ENCODE measurements at regions of chr3 and their contacts with region 1.

Region 1: DNA sequence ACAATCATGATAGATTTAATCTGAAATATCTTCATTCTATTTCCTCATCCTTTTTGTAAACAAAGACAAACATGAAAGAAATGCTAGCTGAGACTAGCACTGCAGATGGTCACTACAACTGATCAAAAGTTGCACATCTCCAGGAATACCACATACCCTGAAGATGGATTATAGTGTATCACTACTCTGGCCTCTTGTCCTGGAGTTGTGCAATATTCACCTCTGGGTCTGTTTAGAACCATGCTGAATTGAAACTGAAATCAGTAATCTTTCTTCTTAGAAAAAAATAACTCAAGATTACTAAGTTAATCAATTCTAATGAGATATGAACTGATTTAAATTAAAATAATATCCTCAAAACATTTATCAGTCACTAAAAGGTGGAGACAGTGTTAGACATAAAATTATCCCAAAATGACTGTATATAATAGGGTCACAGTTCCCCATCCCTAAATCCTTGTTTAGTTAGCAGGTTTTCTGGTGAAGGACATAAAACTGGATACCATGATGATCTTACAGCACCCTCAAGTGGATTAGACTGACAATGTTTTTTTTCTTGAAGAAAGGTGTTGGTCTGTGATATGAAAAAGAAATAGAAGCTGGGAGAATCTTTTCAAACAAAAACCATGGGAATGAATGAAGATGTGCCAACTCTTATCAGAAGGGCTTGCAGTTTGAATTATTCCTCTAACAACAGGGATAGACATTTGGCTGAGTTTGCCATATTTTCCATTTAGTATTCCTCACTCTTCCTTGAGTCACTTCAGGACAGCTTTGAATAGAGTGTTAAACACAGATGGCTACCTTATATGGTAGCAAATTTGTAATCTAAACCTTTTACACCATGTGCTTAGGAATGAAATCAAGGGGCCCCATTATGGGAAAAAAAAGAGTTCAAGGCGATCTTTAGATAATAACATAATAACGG is 7.1 kb upstream of the TTC14 start:
- DNase-seq: peak; percentile 53
- ATAC-seq: peak; percentile 87
- H3K4me3 ChIP-seq: no peak overlapping the region
- H3K27ac ChIP-seq: no peak overlapping the region
- H3K4me1 ChIP-seq: no peaks in the 10 kb centered on the region
- H3K27me3 ChIP-seq: no peaks in the 10 kb centered on the region
- CTCF ChIP-seq: peak; percentile 76; the same call in 1 of the 2 replicates

Region 2: DNA sequence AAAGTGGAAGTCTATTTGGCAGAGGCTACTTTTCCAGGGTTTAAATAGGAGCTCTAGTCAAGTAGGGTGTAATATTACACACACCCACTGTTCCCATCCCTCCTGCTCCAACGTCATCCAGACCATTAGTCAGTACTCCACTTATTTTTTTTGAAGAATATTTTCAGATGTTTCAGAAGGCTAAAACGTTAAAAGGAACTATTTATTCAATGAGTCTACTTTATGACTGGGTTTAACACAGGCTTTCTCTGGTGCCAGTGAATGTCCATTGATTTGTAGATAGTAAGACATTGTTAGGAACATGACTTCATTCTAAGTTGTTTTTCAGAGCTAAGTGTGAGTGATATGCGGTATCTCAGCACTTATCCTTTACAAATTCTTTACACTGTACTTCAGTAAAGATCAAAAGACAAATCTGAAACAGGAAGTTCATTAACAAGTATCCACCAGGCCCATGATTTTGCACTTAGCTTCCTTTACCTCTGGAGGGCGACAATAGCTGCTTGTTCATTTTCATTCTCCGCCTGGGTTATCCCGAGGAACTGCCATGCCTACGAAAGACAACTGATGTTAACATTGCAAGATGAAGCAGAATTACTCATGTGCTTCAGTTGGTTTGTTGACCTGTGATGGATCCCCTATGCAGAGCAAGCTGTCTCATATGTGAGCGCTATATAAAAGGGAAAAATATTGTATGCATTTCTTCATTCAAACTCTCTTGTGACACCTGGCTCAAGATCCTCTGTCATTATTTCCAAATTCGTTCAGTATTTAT is 783.4 kb before region 1 on chr3:
- CTCF ChIA-PET with region 1: no interaction called
- POLR2A ChIA-PET with region 1: no interaction called
- in situ Hi-C with region 1: no loop called
- intact Hi-C with region 1: loop called (anchors 2 kb)
- DNase-seq: peak; percentile 60
- ATAC-seq: peak; percentile 91
- H3K4me3 ChIP-seq: no peak overlapping the region
- H3K27ac ChIP-seq: no peak overlapping the region
- H3K4me1 ChIP-seq: no peaks in the 10 kb centered on the region
- H3K27me3 ChIP-seq: no peaks in the 10 kb centered on the region
- CTCF ChIP-seq: peak; percentile 86

Region 3: DNA sequence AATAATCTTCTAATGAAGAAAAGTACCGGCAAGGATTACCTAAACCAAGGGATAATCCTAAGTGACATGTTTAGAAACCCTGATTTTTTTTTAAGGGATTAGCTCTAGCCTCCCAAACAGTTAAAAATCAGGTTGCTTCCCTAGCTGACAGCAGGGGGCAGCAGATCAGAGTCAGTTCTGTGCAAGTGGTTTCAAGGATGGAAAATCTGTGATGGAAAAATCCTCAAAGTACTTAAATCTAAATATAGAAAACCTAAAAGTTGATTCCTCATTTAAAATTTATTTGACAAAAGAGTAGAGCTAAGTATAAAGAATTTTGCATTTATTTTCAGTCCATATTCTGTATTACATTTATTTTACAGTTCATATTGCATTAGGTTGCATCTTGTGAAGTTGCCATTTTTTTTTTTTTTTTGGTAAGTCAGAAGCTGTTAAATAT is 665.8 kb before region 1 on chr3:
- CTCF ChIA-PET with region 1: interaction called, 3 read pairs
- POLR2A ChIA-PET with region 1: no interaction called
- in situ Hi-C with region 1: no loop called
- intact Hi-C with region 1: loop called (anchors 1 kb)
- DNase-seq: peak; percentile 24
- ATAC-seq: peak; percentile 73; the same call in 1 of the 2 replicates
- H3K4me3 ChIP-seq: no peak overlapping the region
- H3K27ac ChIP-seq: no peak overlapping the region
- H3K4me1 ChIP-seq: no peaks in the 10 kb centered on the region
- H3K27me3 ChIP-seq: no peaks in the 10 kb centered on the region
- CTCF ChIP-seq: peak; percentile 83; the same call in 1 of the 2 replicates

Region 4: GRCh38 chr3:180215866-180216265 is 379.0 kb before region 1 on chr3:
- CTCF ChIA-PET with region 1: no interaction called
- POLR2A ChIA-PET with region 1: no interaction called
- in situ Hi-C with region 1: no loop called
- intact Hi-C with region 1: no loop called
- DNase-seq: no peak
- ATAC-seq: no peak
- H3K4me3 ChIP-seq: no peak overlapping the region
- H3K27ac ChIP-seq: no peak overlapping the region
- H3K4me1 ChIP-seq: no peaks in the 10 kb centered on the region
- H3K27me3 ChIP-seq: no peaks in the 10 kb centered on the region
- CTCF ChIP-seq: no peak

Region 5: DNA sequence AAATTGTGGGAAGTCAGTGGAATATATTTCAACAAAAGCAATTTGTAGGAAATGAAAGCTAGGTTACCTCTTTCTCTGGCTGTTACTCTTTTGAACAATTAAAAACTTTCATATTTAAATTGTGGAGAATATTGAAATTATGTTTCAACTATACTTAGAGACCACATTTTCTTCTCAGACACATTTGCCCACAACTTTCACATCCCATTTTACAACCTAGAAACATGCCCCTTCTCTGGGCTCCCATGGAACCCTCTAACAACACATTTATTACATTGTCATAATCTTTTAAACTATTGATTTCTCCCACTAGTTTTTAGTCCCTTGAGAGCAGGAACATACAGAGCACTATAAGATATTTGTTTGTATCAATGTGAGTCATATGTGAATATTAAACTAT is 204.6 kb before region 1 on chr3:
- CTCF ChIA-PET with region 1: no interaction called
- POLR2A ChIA-PET with region 1: no interaction called
- in situ Hi-C with region 1: no loop called
- intact Hi-C with region 1: no loop called
- DNase-seq: no peak
- ATAC-seq: no peak
- H3K4me3 ChIP-seq: no peak overlapping the region
- H3K27ac ChIP-seq: no peak overlapping the region
- H3K4me1 ChIP-seq: no peaks in the 10 kb centered on the region
- H3K27me3 ChIP-seq: no peaks in the 10 kb centered on the region
- CTCF ChIP-seq: no peak

Region 6: DNA sequence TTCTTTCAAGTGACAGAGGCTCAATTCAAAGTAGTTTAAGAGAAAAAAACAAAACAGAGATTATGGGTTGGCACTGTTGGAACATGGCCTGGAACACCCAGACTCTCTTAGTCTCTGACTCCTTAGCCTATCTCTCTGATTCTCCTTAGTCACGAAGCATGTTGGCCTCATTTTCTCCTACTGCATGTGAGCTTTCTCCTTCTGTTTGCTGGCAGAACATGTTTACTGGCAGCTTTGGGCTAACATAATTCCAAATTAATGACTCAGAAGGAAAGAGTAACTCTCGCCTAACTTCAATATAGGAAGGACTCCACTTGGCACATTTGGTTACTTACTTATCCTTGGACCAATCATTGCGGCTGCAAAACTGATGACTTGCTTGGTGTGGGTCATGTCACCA is 106.0 kb after region 1 on chr3:
- CTCF ChIA-PET with region 1: no interaction called
- POLR2A ChIA-PET with region 1: no interaction called
- in situ Hi-C with region 1: no loop called
- intact Hi-C with region 1: no loop called
- DNase-seq: no peak
- ATAC-seq: no peak
- H3K4me3 ChIP-seq: no peak overlapping the region
- H3K27ac ChIP-seq: no peak overlapping the region
- H3K4me1 ChIP-seq: no peaks in the 10 kb centered on the region
- H3K27me3 ChIP-seq: 0 out of 2 replicates have a peak, but pooled peaks cover 2% of the 10 kb centered on the region
- CTCF ChIP-seq: no peak

Measured in Panc1 (cell line).